ENCODE measurements at regions of chr20 and their contacts with region 1.

Region 1: GRCh38 chr20:17898548-17898994 is 70.0 kb downstream of the SNX5 start:
- DNase-seq: no peak
- H3K4me3 ChIP-seq: no peak overlapping the region
- H3K27ac ChIP-seq: no peak overlapping the region
- H3K4me1 ChIP-seq: peaks cover 5% of the 10 kb centered on the region
- H3K27me3 ChIP-seq: no peaks in the 10 kb centered on the region
- CTCF ChIP-seq: peak; percentile 43 to 96 (median 90)
- POLR2A ChIP-seq: no peak

Region 2: DNA sequence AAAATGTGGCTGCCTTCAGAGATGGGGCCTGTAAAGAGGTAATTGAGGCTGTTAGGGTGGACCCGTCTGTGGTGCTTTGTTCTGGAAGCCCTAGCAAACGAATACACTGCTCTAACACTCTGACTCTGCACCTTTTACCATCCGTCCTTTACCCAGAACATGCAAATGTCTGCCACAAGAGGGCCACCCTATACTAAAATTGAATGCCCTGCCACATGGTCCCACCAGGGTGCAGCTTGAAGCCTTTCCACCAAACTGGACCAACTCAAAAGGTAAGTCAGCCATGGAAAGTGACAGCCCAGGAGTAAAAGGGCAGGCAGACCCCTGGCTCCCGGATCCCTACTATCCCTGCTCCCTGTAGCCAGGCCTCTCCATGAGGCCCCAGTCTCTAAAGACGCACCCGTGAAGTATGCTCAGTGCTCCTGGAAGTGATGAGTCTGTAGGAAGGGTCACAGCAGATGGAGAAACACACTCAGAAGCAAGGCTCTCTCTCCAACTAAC is 361.6 kb before region 1 on chr20:
- intact Hi-C with region 1: loop called (anchors 10 kb)
- DNase-seq: no peak
- H3K4me3 ChIP-seq: no peak overlapping the region
- H3K27ac ChIP-seq: no peak overlapping the region
- H3K4me1 ChIP-seq: peaks cover 15% of the 10 kb centered on the region
- H3K27me3 ChIP-seq: no peaks in the 10 kb centered on the region
- CTCF ChIP-seq: peak; percentile 52 to 98 (median 85)
- POLR2A ChIP-seq: no peak

Region 3: DNA sequence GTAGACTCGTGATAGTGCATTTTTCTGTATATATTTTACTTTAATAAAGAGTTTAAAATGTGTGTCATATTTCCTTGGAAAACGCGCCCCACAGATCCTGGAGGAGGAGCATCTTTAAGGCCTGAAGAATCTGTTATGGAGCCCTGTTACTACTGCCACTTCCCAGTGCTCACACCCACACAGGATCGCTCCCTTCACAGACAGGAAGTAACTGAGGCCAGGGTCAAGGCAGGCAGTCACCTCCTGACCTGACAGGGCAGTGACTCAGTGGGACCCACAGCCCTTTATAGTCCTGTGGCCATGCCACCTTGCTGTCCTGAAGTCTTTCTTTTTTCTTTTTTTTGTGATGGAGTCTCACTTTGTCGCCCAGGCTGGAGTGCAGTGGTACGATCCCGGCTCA is 225.5 kb before region 1 on chr20:
- intact Hi-C with region 1: no loop called
- DNase-seq: no peak
- H3K4me3 ChIP-seq: no peak overlapping the region
- H3K27ac ChIP-seq: no peak overlapping the region
- H3K4me1 ChIP-seq: peaks cover 47% of the 10 kb centered on the region
- H3K27me3 ChIP-seq: no peaks in the 10 kb centered on the region
- CTCF ChIP-seq: no peak
- POLR2A ChIP-seq: no peak

Region 4: GRCh38 chr20:17810847-17811627 is 87.5 kb before region 1 on chr20:
- intact Hi-C with region 1: no loop called
- DNase-seq: no peak
- H3K4me3 ChIP-seq: no peak overlapping the region
- H3K27ac ChIP-seq: no peak overlapping the region
- H3K4me1 ChIP-seq: peaks cover 39% of the 10 kb centered on the region
- H3K27me3 ChIP-seq: no peaks in the 10 kb centered on the region
- CTCF ChIP-seq: no peak
- POLR2A ChIP-seq: no peak

Region 5: GRCh38 chr20:18511571-18511970 is 613.0 kb after region 1 on chr20:
- intact Hi-C with region 1: no loop called
- DNase-seq: no peak
- H3K4me3 ChIP-seq: no peak overlapping the region
- H3K27ac ChIP-seq: no peak overlapping the region
- H3K4me1 ChIP-seq: peaks cover 17% of the 10 kb centered on the region
- H3K27me3 ChIP-seq: no peaks in the 10 kb centered on the region
- CTCF ChIP-seq: no peak
- POLR2A ChIP-seq: no peak

Measured in vagina (tissue), 2 donors.